HCT116 (cell line): ENCODE measurements at regions of chr3 and their contacts with region 1.

Region 1: DNA sequence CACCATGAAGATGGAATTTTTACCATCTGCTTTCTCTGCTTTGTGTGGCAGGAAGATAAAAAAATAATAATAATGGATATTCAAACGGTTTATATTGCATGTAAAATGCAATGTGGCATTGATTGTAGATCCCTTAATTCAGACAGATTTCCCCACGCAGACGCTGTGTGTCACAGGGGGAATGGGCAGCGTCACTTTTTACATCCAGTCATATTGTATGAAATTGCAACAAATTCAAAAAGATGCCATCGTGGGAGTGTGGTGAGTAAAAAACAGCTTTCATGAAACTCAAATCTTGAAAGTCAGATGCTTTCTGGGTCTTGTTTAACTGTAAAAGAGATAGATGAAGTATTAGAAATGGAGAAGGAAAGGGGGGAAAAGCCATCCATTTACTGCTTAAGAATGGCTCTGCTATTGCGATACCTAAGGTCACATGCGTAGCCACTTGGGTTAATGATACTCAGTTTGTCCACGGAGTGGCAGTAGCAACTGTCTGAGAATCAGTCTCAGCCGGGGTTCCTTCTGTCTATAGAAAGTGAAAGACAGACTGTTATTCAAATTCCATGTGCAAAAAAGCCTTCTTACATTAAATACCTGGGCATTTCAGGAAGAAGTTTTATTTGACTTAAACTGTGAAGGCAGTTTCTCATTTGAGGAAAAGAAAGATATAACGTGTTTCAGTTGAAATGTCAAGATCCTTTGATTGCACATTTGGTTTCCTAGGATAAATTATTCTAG is 28.5 kb downstream of the BTD start:
- DNase-seq: peak; percentile 70
- ATAC-seq: peak; percentile 94
- H3K4me3 ChIP-seq: peak overlapping the region; percentile 27 to 29
- H3K27ac ChIP-seq: peak overlapping the region; percentile 2; the same call in 1 of the 2 replicates
- H3K4me1 ChIP-seq: peaks cover 21 to 45% of the 10 kb centered on the region in 2 experiments
- H3K27me3 ChIP-seq: no peaks in the 10 kb centered on the region
- CTCF ChIP-seq: peak; percentile 63 to 83 (median 77)
- POLR2A ChIP-seq: no peak
- RAD21 ChIP-seq: peak; percentile 90

Region 2: DNA sequence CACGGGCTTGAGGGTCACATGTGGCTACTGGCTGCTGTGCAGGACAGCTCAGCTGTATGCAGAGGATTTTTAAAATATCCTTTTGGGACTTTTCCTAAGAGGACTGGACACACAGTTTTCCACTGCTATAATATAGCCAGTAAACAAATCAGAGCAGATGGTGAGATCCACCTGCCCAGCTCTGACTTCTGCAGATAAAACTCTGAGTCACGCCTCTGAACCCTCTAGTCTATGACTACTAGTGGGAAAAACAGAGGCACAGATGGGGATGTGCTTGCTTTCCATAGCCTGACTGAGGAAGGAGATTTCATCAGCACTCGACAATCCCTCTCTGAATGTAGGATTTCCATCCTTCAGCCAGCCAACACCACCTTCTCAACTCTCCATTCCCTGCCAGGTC is 153.7 kb before region 1 on chr3:
- CTCF ChIA-PET with region 1: no interaction called
- POLR2A ChIA-PET with region 1: no interaction called
- RAD21 ChIA-PET with region 1: no interaction called
- intact Hi-C with region 1: no loop called
- DNase-seq: no peak
- ATAC-seq: no peak
- H3K4me3 ChIP-seq: no peak overlapping the region
- H3K27ac ChIP-seq: no peak overlapping the region
- H3K4me1 ChIP-seq: no peaks in the 10 kb centered on the region
- H3K27me3 ChIP-seq: no peaks in the 10 kb centered on the region
- CTCF ChIP-seq: no peak
- POLR2A ChIP-seq: no peak
- RAD21 ChIP-seq: no peak

Region 3: DNA sequence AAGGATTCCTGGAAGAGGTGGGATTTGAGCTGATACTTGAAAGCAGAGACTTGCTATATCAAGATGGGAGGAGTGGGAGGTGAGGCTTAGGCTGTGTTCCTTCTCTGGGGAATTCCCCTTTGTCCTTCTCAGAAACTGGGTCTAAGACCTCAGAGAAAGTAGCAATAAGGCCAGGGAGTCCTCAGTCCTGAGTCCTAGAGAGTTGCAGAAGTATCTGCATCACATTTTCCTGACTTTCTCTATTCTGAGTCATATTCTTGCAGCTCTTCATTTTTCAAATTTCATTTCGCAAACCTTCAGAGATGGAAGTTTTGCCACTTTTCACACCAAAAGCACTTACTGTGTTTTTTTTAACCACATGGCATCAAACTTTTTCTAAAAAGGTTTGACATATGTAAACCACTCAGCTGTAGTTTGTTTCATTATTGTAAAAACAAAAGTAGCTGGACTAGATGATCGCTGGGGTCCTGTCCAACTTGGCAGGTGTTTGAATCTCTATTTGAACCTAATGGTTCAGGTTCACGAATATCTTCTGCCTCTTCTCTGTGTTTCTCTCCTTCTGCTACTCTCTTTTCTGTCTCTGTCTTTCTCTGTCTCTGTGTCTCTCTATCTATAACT is 129.8 kb before region 1 on chr3:
- CTCF ChIA-PET with region 1: no interaction called
- POLR2A ChIA-PET with region 1: no interaction called
- RAD21 ChIA-PET with region 1: no interaction called
- intact Hi-C with region 1: no loop called
- DNase-seq: no peak
- ATAC-seq: no peak
- H3K4me3 ChIP-seq: no peak overlapping the region
- H3K27ac ChIP-seq: no peak overlapping the region
- H3K4me1 ChIP-seq: no peaks in the 10 kb centered on the region
- H3K27me3 ChIP-seq: no peaks in the 10 kb centered on the region
- CTCF ChIP-seq: no peak
- POLR2A ChIP-seq: no peak
- RAD21 ChIP-seq: no peak

Region 4: GRCh38 chr3:15616053-15616452 is 14.0 kb before region 1 on chr3:
- CTCF ChIA-PET with region 1: no interaction called
- POLR2A ChIA-PET with region 1: no interaction called
- RAD21 ChIA-PET with region 1: no interaction called
- intact Hi-C with region 1: no loop called
- DNase-seq: no peak
- ATAC-seq: no peak
- H3K4me3 ChIP-seq: no peak overlapping the region
- H3K27ac ChIP-seq: no peak overlapping the region
- H3K4me1 ChIP-seq: no peaks in the 10 kb centered on the region
- H3K27me3 ChIP-seq: no peaks in the 10 kb centered on the region
- CTCF ChIP-seq: no peak
- POLR2A ChIP-seq: no peak
- RAD21 ChIP-seq: no peak

Region 5: DNA sequence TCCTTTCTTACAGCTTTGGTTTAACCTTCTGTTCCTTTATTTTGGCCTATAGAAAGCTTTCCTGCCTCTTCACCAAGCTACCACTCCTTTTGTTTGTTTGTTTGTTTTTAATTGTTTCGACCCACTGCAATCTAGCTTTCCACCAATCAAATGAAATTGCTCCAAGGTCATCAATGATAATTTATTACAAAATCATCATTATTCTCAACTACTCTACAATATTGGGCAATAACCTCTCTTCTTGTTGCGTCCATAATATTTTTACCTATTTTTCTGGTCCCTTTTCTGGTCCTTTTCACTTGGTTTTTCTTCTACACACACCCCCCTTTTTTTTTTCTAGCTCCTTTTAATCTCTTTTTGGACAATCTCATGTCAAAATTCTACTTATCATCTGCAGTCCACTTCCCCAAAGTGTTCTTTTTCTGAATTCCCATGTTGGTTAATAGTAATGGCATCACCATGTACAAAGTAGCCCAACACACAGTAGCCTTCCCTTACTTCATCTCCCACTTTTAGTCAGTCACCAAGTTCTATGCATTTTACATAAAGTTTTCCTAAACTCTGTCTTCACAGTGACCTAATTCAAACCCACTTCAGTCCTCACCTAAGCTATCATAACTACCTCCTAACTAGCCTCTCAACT is 178.8 kb after region 1 on chr3:
- CTCF ChIA-PET with region 1: interaction called, 27 read pairs
- POLR2A ChIA-PET with region 1: interaction called, 3 read pairs
- RAD21 ChIA-PET with region 1: interaction called, 4 to 14 read pairs
- intact Hi-C with region 1: loop called (anchors 1 kb)
- DNase-seq: no peak
- ATAC-seq: no peak
- H3K4me3 ChIP-seq: no peak overlapping the region
- H3K27ac ChIP-seq: no peak overlapping the region
- H3K4me1 ChIP-seq: peaks cover 3 to 19% of the 10 kb centered on the region in 2 experiments; a peak in 3 of 4 replicates
- H3K27me3 ChIP-seq: no peaks in the 10 kb centered on the region
- CTCF ChIP-seq: no peak
- POLR2A ChIP-seq: no peak
- RAD21 ChIP-seq: no peak

Region 6: DNA sequence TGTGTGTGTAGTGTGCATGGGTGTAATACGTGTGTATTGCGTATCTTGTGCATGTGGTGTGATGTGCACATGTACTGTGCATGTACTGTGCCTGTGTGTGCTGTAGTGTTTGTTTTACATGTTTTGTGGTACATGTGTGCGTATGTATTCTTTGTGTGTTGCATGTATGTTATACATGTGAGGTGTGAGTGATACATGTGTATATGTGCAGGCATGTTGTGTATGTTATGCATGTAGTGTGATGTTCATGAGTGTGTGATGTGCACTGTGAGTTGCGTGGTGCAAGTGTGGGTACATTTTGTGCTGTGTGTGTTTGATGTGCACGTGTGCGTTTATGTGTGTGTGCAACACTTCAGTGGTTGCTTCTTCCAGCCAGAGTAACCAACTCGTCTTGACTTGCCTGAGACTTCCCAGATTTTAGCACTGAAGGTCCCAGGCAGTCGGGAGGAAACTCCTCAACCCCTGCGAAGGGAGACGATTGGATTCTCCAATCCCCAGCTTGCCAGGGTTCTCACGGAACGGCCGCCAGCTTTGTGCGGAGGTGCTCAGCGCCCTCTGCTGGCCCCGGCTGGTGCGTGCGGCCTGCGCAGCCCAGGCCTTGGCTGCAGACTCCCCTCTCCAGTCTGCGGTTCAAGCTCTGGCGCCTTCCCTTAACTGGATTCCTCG is 548.1 kb after region 1 on chr3:
- CTCF ChIA-PET with region 1: interaction called, 4 read pairs
- POLR2A ChIA-PET with region 1: no interaction called
- RAD21 ChIA-PET with region 1: no interaction called
- intact Hi-C with region 1: loop called (anchors 5 kb)
- DNase-seq: peak; percentile 38
- ATAC-seq: peak; percentile 97
- H3K4me3 ChIP-seq: no peak overlapping the region
- H3K27ac ChIP-seq: no peak overlapping the region
- H3K4me1 ChIP-seq: peaks cover 0 to 9% of the 10 kb centered on the region in 2 experiments; a peak in 1 of 4 replicates
- H3K27me3 ChIP-seq: no peaks in the 10 kb centered on the region
- CTCF ChIP-seq: peak; percentile 88 to 98 (median 96)
- POLR2A ChIP-seq: no peak
- RAD21 ChIP-seq: peak; percentile 98

Region 7: DNA sequence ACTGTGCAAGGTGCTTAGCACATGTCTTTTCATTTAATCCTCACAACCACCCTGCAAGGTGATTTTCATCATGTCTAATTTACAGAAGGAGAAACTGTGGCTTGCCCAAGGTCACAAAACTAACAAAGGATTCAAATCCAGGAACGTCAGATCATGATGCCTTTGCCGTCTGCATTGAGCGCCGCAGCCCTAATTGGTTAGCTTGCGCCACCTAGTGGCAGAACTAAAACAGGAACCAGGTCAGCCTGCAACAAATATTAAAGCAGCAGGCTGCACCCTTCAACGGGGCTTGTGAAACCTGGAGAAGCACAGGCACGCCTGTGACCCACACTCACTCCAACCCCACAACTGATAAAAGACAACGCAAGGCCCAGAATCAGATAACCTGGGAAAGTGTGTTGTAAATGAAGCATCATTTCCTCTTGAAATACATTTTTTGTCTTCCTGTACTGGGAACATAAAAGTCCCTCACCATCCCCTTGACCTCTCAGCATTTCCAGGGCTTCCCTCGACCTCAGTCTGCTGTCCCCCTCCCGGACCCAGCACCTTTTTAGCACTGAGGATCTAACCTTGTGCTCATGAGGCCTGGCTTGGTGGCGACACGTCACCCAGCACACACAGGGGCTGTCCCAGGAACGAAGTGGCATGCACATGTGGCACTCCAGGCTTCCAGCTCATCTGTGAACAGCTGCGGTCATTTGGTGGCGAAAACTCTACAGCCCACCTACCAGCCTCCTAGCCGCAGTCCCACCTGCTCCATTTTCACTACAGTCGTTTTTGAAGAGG is 617.4 kb after region 1 on chr3:
- CTCF ChIA-PET with region 1: no interaction called
- POLR2A ChIA-PET with region 1: no interaction called
- RAD21 ChIA-PET with region 1: no interaction called
- intact Hi-C with region 1: loop called (anchors 1 kb)
- DNase-seq: peak; percentile 66
- ATAC-seq: peak; percentile 88
- H3K4me3 ChIP-seq: no peak overlapping the region
- H3K27ac ChIP-seq: no peak overlapping the region
- H3K4me1 ChIP-seq: peaks cover 0 to 15% of the 10 kb centered on the region in 2 experiments; a peak in 1 of 4 replicates
- H3K27me3 ChIP-seq: no peaks in the 10 kb centered on the region
- CTCF ChIP-seq: peak; percentile 82 to 97 (median 93)
- POLR2A ChIP-seq: no peak
- RAD21 ChIP-seq: peak; percentile 97